OCI-LY7 (cell line): ENCODE measurements at regions of chr19 and their contacts with region 1.

Region 1: GRCh38 chr19:41959056-41960053 is at the start of gene RABAC1:
- DNase-seq: peak; percentile 93
- H3K4me3 ChIP-seq: peak within 1 kb of the TSS; percentile 88
- H3K27ac ChIP-seq: peak within 1 kb of the TSS; percentile 65
- H3K4me1 ChIP-seq: peaks cover 19% of the 10 kb centered on the region
- CTCF ChIP-seq: peak; percentile 76
- total RNA-seq, gene RABAC1: 161 and 171 TPM in 2 replicates

Region 2: DNA sequence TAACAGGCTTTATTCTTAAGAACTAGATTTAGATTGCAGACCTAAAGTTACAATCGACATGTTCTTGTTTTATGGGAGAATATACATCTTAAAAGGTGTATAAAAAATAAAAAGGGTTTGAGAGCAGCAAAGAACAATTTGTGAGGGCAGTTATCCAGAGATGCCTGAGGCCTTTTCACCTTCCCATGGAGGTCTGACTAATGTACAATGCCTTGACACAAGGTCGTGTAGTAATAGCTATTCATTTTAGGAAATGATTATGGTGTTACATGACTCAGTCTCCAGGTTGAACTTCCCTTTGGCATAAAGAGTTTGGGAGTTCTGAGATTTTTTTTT is 184.0 kb before region 1 on chr19:
- CTCF ChIA-PET with region 1: no interaction called
- POLR2A ChIA-PET with region 1: no interaction called
- intact Hi-C with region 1: no loop called
- DNase-seq: no peak
- H3K4me3 ChIP-seq: no peak overlapping the region
- H3K27ac ChIP-seq: no peak overlapping the region
- H3K4me1 ChIP-seq: no peaks in the 10 kb centered on the region
- CTCF ChIP-seq: no peak

Region 3: GRCh38 chr19:41795031-41795461 is 164.3 kb before region 1 on chr19:
- CTCF ChIA-PET with region 1: no interaction called
- POLR2A ChIA-PET with region 1: no interaction called
- intact Hi-C with region 1: loop called (anchors 10 kb)
- DNase-seq: peak; percentile 73
- H3K4me3 ChIP-seq: no peak overlapping the region
- H3K27ac ChIP-seq: no peak overlapping the region
- H3K4me1 ChIP-seq: peaks cover 16% of the 10 kb centered on the region
- CTCF ChIP-seq: peak; percentile 94

Region 4: DNA sequence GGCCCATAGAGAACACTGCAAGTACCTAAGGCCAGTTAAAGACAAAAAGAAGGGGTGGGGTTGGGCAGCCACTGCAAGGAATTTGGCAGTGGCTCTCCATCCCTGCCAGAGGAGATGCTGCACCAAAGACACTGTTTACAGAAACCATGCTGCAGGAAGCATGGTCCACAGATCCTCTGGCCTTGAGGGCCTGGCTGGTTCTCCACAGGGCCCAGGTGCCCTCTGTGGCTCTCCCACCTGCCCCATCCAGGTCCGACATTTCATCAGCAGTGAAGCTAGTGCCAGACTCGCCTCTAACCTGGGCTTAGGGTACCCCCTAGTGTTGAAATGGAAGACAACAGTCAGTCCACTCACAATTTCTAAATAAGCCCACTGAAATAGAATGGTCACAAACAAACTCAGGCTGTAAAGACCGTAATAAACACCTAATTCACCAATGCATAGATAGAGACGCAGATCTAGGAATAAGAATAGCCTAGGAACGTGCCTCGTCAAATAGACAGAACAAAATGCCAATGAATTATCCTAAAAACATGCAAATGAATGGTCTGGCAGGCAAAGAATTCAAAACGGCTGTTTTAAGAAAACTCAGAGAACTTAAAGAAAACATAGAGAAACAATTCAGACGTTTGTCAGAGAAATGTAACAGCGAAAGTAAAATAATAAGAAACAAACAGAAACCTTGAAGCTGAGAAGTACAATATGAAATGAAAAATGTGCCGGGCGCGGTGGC is 138.2 kb before region 1 on chr19:
- CTCF ChIA-PET with region 1: no interaction called
- POLR2A ChIA-PET with region 1: no interaction called
- intact Hi-C with region 1: no loop called
- DNase-seq: peak; percentile 84
- H3K4me3 ChIP-seq: no peak overlapping the region
- H3K27ac ChIP-seq: no peak overlapping the region
- H3K4me1 ChIP-seq: peaks cover 5% of the 10 kb centered on the region
- CTCF ChIP-seq: peak; percentile 96

Region 5: GRCh38 chr19:41993612-41994483 is 34.5 kb after region 1 on chr19 and contains the start of gene ATP1A3:
- CTCF ChIA-PET with region 1: no interaction called
- POLR2A ChIA-PET with region 1: no interaction called
- intact Hi-C with region 1: loop called (anchors 2 kb)
- DNase-seq: peak; percentile 87
- H3K4me3 ChIP-seq: peak within 1 kb of the TSS; percentile 95
- H3K27ac ChIP-seq: peak within 1 kb of the TSS; percentile 15
- H3K4me1 ChIP-seq: peaks cover 38% of the 10 kb centered on the region
- CTCF ChIP-seq: no peak
- total RNA-seq, gene ATP1A3: 3.1 and 9.3 TPM in 2 replicates

Region 6: DNA sequence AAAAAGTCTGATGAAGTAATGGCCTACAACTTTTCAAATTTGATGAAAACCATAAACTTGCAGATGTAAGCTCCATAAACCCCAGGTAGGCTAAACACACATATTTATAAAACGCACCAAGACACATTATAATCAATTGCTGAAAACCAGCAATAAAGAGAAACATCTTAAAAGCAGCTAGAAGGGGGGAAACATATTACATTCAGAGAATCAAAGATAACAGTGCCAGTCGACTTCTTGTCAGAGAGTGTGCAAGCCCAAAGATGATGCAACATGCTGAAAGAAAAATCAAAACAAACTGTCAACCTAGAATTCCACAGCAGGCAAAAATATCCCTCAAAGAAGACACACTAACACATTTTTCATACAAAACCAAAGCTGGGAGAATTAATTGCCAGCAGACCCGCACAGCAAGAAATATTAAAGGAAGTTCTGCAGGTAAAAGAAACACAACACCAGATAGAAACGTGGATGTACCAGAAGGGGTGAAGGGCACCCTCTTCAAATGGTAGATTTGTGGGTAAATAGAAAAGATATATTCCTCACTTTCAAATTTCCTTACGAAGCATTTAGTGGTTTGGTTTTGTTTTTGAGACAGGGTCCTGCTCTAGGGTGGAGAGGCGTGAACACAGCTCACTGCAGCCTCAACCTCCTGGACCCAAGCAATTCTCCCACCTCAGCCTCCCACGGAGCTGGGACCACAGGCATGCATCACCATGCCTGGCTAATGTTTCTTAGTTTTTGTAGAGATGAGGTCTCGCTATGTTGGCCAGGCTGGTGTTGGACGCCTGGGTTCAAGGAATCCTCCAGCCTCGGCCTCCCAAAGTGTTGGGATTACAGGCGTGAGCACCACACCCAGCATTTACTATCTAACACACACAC is 51.1 kb after region 1 on chr19:
- CTCF ChIA-PET with region 1: no interaction called
- POLR2A ChIA-PET with region 1: no interaction called
- intact Hi-C with region 1: no loop called
- DNase-seq: peak; percentile 17
- H3K4me3 ChIP-seq: no peak overlapping the region
- H3K27ac ChIP-seq: no peak overlapping the region
- H3K4me1 ChIP-seq: no peaks in the 10 kb centered on the region
- CTCF ChIP-seq: no peak

Region 7: DNA sequence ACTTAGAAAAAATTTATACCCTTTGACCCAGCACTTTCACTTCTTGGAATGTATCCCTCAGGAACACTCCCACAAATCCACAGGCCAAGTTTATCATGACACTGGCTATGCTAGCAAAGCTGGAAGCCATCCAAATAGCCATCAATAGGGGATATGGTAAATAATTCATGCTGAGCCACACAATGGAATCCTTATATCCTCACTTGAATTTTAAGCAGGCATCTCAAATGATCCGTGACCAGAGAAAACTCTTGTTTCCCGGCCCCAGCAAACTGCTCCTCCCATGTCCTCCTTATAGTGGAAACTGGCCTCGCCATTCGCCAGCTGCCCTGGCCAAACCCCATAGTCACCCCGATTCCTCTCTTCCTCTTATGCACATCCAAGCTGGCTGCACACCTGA is 73.1 kb after region 1 on chr19:
- CTCF ChIA-PET with region 1: no interaction called
- POLR2A ChIA-PET with region 1: interaction called, 3 read pairs
- intact Hi-C with region 1: loop called (anchors 5 kb)
- DNase-seq: no peak
- H3K4me3 ChIP-seq: no peak overlapping the region
- H3K27ac ChIP-seq: no peak overlapping the region
- H3K4me1 ChIP-seq: peaks cover 4% of the 10 kb centered on the region
- CTCF ChIP-seq: no peak